ENCODE measurements at regions of chr15 and their contacts with region 1.

Region 1: DNA sequence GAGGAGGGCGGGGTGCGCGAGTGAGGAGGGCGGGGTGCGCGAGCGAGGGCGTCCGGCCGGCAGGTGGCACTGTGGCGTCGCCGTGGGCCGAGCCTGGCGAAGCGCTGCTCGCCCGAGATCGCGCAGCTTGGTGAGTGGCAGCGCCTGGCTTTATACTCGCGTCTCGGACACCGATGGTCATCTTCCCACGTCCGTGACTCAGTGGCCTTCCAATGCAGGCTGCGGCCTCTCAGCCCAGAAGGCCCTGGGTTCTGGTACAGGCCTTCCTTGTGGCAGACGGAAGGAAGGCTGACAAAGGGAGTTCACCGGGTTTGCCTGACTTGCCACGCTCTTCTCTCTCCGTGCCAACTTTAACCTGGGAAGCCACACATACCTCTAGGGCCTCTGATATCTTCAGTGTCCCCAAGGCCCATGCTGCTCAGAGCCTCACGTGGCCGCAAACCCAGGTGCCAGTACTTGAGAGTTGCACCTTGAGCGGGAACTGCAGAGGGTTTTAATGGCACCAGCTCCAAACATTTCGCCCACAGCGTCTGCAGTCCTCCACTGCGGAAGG is 195.3 kb upstream of the LYSMD4 start:
- DNase-seq: peak; percentile 96

Region 2: DNA sequence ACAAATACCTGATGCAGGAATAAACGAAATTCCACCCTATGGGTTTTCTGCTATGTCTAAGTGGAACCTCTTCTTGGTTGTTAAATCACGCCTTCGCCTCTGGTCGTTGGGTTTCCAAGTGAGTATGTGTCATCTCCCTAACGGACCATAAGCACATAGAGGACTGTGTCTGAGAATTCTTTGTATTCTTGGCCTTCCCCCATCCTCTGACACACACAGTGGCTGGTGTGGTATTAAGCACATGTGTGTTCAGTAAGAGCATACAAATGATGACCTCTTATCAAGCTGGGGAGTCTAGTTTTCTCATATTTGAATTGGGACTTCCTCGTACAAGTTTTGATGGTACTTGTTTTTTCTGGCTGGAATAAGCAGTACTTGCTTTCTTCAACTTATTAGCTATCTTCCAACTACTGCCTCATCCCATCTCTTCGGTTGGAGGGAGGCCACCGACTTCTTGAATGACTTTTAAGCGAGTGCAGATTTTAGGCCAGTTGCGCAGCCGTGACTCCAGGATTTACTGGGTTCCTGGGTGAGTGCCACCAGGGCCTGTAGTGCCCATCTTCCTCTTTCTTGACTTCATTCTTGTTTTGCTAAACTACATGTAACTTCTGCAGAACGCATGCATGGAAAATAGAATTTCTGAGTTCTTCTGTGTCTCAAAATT is 173.1 kb after region 1 on chr15:
- intact Hi-C with region 1: loop called in 1 of 2 experiments (anchors 10 kb)
- DNase-seq: peak; percentile 82

Region 3: DNA sequence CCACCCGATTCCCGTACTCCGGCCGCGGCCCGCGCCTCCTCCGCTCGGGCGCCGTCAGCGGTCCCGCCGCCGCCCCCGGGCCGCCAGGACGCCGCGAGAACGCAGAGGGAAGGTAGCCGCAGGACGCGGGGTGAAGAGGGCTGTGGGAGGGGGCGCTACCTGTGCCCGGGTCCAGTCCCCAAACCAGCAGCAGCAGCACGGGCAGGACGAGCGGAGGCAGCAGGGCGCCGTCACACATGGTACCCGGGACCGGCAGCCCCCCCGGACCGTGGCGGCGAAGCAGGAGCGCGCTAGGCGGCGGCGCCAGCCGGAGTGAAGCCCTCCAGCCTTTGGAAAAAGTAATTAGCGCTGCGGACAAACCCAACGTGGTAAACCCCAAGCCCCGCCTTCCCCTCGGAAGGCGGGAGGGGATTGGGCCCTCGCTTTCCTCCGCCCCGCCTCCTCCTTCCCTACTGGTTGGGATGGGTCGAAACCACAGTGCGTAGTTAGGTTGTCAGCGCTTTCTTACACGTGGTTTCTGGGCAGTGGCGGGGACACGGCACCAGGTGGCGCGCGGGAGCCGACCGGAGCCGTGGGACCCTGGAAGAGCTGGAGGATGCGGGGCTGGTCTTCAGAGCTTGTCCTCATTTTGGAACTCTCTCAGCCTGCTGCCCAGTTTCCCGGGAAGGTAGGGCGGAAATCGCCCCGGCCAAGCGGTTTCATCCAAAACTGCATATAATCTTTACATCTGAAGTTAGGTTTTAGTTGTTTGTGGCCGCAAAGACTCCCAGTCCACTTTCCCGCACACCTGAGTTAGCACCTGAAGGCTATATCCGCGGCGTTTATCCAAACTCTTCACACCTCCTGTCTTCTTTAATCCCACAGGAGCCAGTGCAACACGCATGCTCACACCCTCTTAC is 413.4 kb after region 1 on chr15 and contains the start of gene ADAMTS17:
- intact Hi-C with region 1: loop called in 1 of 2 experiments (anchors 5 kb)
- DNase-seq: peak; percentile 97
- total RNA-seq, gene ADAMTS17: 4.0 to 6.8 TPM

Measured in posterior vena cava (tissue), 2 donors.